Caco-2 (cell line): ENCODE measurements at regions of chr5 and their contacts with region 1.

Region 1: GRCh38 chr5:171272996-171273970 is 35.8 kb upstream of the TLX3 start:
- DNase-seq: peak; percentile 61 to 64
- H3K4me3 ChIP-seq: no peak overlapping the region
- H3K4me3 Mint-ChIP-seq: no peak overlapping the region
- H3K27ac Mint-ChIP-seq: no peak overlapping the region
- H3K4me1 ChIP-seq: no peaks in the 10 kb centered on the region
- H3K4me1 Mint-ChIP-seq: no peaks in the 10 kb centered on the region
- H3K27me3 ChIP-seq: no peaks in the 10 kb centered on the region
- H3K27me3 Mint-ChIP-seq: no peaks in the 10 kb centered on the region
- CTCF ChIP-seq: peak; percentile 68 to 73

Region 2: DNA sequence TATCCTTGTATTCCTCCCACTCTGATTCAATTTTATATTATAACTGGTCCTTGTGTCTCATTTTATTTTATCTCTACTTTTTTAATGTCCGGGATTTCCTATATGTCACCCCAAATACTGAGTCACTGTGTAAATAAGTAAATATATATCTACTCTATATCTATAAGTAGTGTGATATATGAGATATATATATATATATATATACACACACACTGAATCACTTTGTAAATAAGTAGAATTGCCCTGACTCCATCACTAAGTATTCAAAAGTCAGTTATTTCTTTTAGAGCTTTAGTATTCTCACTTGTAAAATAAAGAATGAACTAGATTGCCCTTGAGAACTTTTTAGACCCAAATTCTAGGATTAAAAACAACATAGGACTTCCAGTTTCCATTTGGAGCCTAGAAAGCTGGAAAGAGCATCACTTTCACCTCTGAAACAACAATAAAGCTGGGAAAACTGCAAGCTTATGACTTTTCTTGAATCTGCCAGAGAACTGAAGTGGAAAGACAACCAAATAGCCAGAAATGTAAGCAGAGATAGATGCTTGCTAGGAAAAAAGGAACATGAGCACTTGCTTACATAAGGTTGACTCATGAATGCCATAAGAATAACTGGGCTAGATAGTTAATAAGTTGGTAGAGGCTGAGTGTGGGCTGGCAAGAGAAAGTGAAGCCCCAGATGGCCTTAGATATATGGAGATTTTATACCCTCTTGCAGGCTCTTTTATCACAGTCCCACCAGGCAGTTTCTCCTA is 135.3 kb before region 1 on chr5:
- CTCF ChIA-PET with region 1: no interaction called
- POLR2A ChIA-PET with region 1: no interaction called
- intact Hi-C with region 1: no loop called
- DNase-seq: no peak
- H3K4me3 ChIP-seq: no peak overlapping the region
- H3K4me3 Mint-ChIP-seq: no peak overlapping the region
- H3K27ac Mint-ChIP-seq: no peak overlapping the region
- H3K4me1 ChIP-seq: no peaks in the 10 kb centered on the region
- H3K4me1 Mint-ChIP-seq: no peaks in the 10 kb centered on the region
- H3K27me3 ChIP-seq: no peaks in the 10 kb centered on the region
- H3K27me3 Mint-ChIP-seq: no peaks in the 10 kb centered on the region
- CTCF ChIP-seq: no peak

Region 3: GRCh38 chr5:171336521-171337209 is 63.4 kb after region 1 on chr5:
- CTCF ChIA-PET with region 1: no interaction called
- POLR2A ChIA-PET with region 1: no interaction called
- intact Hi-C with region 1: loop called (anchors 1 kb)
- DNase-seq: peak; percentile 48 to 50
- H3K4me3 ChIP-seq: peak overlapping the region; percentile 38
- H3K4me3 Mint-ChIP-seq: peak overlapping the region; percentile 71
- H3K27ac Mint-ChIP-seq: no peak overlapping the region
- H3K4me1 ChIP-seq: peaks cover 13% of the 10 kb centered on the region
- H3K4me1 Mint-ChIP-seq: no peaks in the 10 kb centered on the region
- H3K27me3 ChIP-seq: no peaks in the 10 kb centered on the region
- H3K27me3 Mint-ChIP-seq: peaks cover 4% of the 10 kb centered on the region
- CTCF ChIP-seq: peak; percentile 69 to 82

Region 4: GRCh38 chr5:171342362-171343111 is 69.3 kb after region 1 on chr5:
- CTCF ChIA-PET with region 1: no interaction called
- POLR2A ChIA-PET with region 1: no interaction called
- intact Hi-C with region 1: loop called (anchors 1 kb)
- DNase-seq: peak; percentile 50 to 60
- H3K4me3 ChIP-seq: no peak overlapping the region
- H3K4me3 Mint-ChIP-seq: no peak overlapping the region
- H3K27ac Mint-ChIP-seq: no peak overlapping the region
- H3K4me1 ChIP-seq: peaks cover 8% of the 10 kb centered on the region
- H3K4me1 Mint-ChIP-seq: no peaks in the 10 kb centered on the region
- H3K27me3 ChIP-seq: no peaks in the 10 kb centered on the region
- H3K27me3 Mint-ChIP-seq: no peaks in the 10 kb centered on the region
- CTCF ChIP-seq: peak; percentile 69 to 75

Region 5: DNA sequence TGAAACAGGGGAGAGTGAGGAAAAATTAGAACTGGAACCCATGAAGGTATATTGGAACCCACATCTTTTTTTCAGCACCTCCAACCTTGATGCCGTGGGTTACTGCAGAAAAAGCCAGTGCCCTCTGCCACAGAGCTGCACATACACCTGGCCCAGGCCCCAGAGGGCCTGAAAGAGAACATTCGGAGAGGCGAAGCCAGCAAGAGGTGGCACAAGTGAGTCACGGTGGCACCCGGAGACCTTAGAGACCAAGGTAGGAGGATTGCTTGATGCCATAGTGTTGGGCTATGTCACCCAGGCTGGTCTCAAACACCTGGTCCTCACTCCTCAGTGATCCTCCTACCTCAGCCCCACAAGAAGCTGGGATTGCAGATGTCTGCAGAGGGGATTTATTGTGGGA is 79.8 kb after region 1 on chr5:
- CTCF ChIA-PET with region 1: no interaction called
- POLR2A ChIA-PET with region 1: no interaction called
- intact Hi-C with region 1: no loop called
- DNase-seq: no peak
- H3K4me3 ChIP-seq: no peak overlapping the region
- H3K4me3 Mint-ChIP-seq: no peak overlapping the region
- H3K27ac Mint-ChIP-seq: no peak overlapping the region
- H3K4me1 ChIP-seq: no peaks in the 10 kb centered on the region
- H3K4me1 Mint-ChIP-seq: no peaks in the 10 kb centered on the region
- H3K27me3 ChIP-seq: no peaks in the 10 kb centered on the region
- H3K27me3 Mint-ChIP-seq: no peaks in the 10 kb centered on the region
- CTCF ChIP-seq: no peak